ENCODE measurements at regions of chr17 and their contacts with region 1.

Region 1: DNA sequence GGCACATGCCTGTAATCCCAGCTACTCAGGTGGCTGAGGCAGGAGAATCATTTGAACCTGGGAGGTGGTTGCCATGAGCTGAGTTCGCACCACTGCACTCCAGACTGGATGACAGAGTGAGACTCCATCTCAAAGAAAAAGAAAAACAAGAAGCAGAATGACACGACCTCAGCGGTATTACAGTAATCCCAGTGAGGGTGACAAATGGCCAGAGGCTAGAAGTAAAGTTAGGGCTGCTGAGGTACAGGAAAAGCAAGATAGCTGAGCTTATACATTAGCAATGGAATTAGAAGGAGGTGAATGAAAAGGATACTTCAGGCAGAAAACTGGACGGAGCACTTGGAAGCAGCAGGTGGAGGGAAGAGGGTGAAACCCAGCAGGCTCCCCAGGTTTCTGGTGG is 26.1 kb upstream of the AMZ2 start:
- DNase-seq: peak in 1 of 2 experiments; percentile 72
- H3K4me3 ChIP-seq: no peak overlapping the region
- H3K27ac ChIP-seq: no peak overlapping the region
- H3K4me1 ChIP-seq: peaks cover 7% of the 10 kb centered on the region; the same call in 1 of the 2 replicates
- H3K27me3 ChIP-seq: no peaks in the 10 kb centered on the region
- CTCF ChIP-seq: no peak

Region 2: DNA sequence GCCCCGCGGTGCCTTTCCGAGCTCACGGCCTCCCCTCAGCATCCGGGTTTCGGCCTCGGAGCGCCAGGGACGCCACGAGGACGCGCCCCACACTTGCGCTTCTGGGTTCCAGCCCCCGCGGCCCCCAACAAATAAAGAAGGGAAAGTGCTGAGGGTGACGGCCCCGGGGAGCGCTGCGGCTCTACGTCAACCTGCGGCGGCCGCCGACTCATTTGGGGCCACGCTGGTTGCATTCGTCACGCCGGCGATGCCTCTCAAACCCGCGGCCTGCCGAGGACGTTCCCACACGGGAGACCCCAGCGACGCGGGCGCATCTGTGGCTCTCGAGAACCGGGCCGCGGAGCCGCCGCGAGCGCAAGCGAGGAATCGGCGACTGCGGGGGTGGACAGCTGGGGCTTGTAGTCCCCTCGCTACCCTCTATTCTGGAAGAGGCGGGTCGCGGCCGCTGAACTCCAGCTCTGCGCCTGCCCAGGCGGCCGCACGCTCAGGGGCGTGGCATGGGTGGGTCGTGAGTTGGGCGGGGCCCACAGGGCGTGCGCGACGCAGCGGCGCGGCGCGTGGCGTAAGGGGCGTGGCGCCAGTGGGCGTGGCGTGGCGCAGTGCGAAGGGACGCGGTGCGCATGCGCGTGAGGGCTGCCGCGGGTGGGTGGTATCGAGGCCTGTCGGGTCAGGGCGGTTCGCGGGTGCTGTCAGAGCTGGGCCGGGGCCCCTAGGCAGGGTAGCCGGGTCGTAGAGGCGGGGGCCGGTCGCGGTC is 25.9 kb after region 1 on chr17 and contains the start of gene AMZ2:
- CTCF ChIA-PET with region 1: interaction called, 25 read pairs
- POLR2A ChIA-PET with region 1: no interaction called
- intact Hi-C with region 1: no loop called
- DNase-seq: peak; percentile 65 to 94
- H3K4me3 ChIP-seq: peak within 1 kb of the TSS; percentile 80
- H3K27ac ChIP-seq: peak within 1 kb of the TSS; percentile 63
- H3K4me1 ChIP-seq: peaks cover 10% of the 10 kb centered on the region
- H3K27me3 ChIP-seq: no peaks in the 10 kb centered on the region
- CTCF ChIP-seq: no peak
- total RNA-seq, gene AMZ2: 60.8 and 88.3 TPM in 2 replicates

Region 3: GRCh38 chr17:68273722-68274121 is 52.0 kb after region 1 on chr17:
- CTCF ChIA-PET with region 1: no interaction called
- POLR2A ChIA-PET with region 1: no interaction called
- intact Hi-C with region 1: no loop called
- DNase-seq: no peak
- H3K4me3 ChIP-seq: no peak overlapping the region
- H3K27ac ChIP-seq: no peak overlapping the region
- H3K4me1 ChIP-seq: no peaks in the 10 kb centered on the region
- H3K27me3 ChIP-seq: no peaks in the 10 kb centered on the region
- CTCF ChIP-seq: no peak

Measured in PC-9 (cell line).